ENCODE measurements at regions of chr11 and their contacts with region 1.

Region 1: GRCh38 chr11:86499721-86500141 is 125.0 kb downstream of the CCDC81 start:
- DNase-seq: peak; percentile 89 to 94
- H3K4me3 ChIP-seq: no peak overlapping the region
- H3K4me3 Mint-ChIP-seq: no peak overlapping the region
- H3K27ac Mint-ChIP-seq: no peak overlapping the region
- H3K4me1 ChIP-seq: peaks cover 59% of the 10 kb centered on the region
- H3K4me1 Mint-ChIP-seq: peaks cover 13% of the 10 kb centered on the region
- H3K27me3 ChIP-seq: no peaks in the 10 kb centered on the region
- H3K27me3 Mint-ChIP-seq: no peaks in the 10 kb centered on the region
- CTCF ChIP-seq: no peak

Region 2: GRCh38 chr11:86395061-86395551 is 104.6 kb before region 1 on chr11:
- CTCF ChIA-PET with region 1: no interaction called
- POLR2A ChIA-PET with region 1: no interaction called
- intact Hi-C with region 1: no loop called
- DNase-seq: no peak
- H3K4me3 ChIP-seq: no peak overlapping the region
- H3K4me3 Mint-ChIP-seq: no peak overlapping the region
- H3K27ac Mint-ChIP-seq: no peak overlapping the region
- H3K4me1 ChIP-seq: no peaks in the 10 kb centered on the region
- H3K4me1 Mint-ChIP-seq: no peaks in the 10 kb centered on the region
- H3K27me3 ChIP-seq: no peaks in the 10 kb centered on the region
- H3K27me3 Mint-ChIP-seq: no peaks in the 10 kb centered on the region
- CTCF ChIP-seq: no peak

Region 3: GRCh38 chr11:86469491-86470393 is 30.0 kb before region 1 on chr11:
- CTCF ChIA-PET with region 1: interaction called, 9 read pairs
- POLR2A ChIA-PET with region 1: no interaction called
- intact Hi-C with region 1: loop called (anchors 1 kb)
- DNase-seq: peak; percentile 89 to 91
- H3K4me3 ChIP-seq: no peak overlapping the region
- H3K4me3 Mint-ChIP-seq: peak overlapping the region; percentile 36
- H3K27ac Mint-ChIP-seq: peak overlapping the region; percentile 70
- H3K4me1 ChIP-seq: peaks cover 44% of the 10 kb centered on the region
- H3K4me1 Mint-ChIP-seq: peaks cover 58% of the 10 kb centered on the region
- H3K27me3 ChIP-seq: no peaks in the 10 kb centered on the region
- H3K27me3 Mint-ChIP-seq: no peaks in the 10 kb centered on the region
- CTCF ChIP-seq: no peak

Region 4: GRCh38 chr11:86511086-86511551 is 11.4 kb after region 1 on chr11:
- CTCF ChIA-PET with region 1: no interaction called
- POLR2A ChIA-PET with region 1: no interaction called
- intact Hi-C with region 1: loop called (anchors 1 kb)
- DNase-seq: no peak
- H3K4me3 ChIP-seq: no peak overlapping the region
- H3K4me3 Mint-ChIP-seq: no peak overlapping the region
- H3K27ac Mint-ChIP-seq: no peak overlapping the region
- H3K4me1 ChIP-seq: peaks cover 91% of the 10 kb centered on the region
- H3K4me1 Mint-ChIP-seq: peaks cover 3% of the 10 kb centered on the region
- H3K27me3 ChIP-seq: no peaks in the 10 kb centered on the region
- H3K27me3 Mint-ChIP-seq: no peaks in the 10 kb centered on the region
- CTCF ChIP-seq: no peak

Region 5: GRCh38 chr11:86523738-86524619 is 24.2 kb after region 1 on chr11:
- CTCF ChIA-PET with region 1: no interaction called
- POLR2A ChIA-PET with region 1: no interaction called
- intact Hi-C with region 1: loop called (anchors 1 kb)
- DNase-seq: peak; percentile 89 to 91
- H3K4me3 ChIP-seq: no peak overlapping the region
- H3K4me3 Mint-ChIP-seq: peak overlapping the region; percentile 38
- H3K27ac Mint-ChIP-seq: peak overlapping the region; percentile 88
- H3K4me1 ChIP-seq: peaks cover 57% of the 10 kb centered on the region
- H3K4me1 Mint-ChIP-seq: peaks cover 45% of the 10 kb centered on the region
- H3K27me3 ChIP-seq: no peaks in the 10 kb centered on the region
- H3K27me3 Mint-ChIP-seq: no peaks in the 10 kb centered on the region
- CTCF ChIP-seq: no peak

Region 6: DNA sequence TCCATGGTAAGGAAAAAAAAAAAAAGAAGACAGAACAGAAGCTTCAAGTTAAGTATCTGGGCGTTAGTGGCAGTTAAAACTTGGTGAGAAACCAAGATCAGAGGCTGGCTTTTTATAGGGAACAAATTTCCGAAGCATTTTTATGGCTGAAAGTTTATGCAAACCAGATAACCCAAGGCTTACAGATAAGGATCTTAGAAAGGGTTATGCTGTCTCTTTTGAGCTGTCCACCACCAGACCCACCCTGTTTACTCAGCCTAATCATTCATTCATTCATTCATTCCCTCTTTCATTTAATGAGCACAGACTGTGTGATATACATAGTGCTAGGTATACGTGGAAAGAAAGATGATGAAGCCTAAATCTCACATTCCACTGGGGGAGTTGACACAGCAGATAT is 83.2 kb after region 1 on chr11:
- CTCF ChIA-PET with region 1: no interaction called
- POLR2A ChIA-PET with region 1: no interaction called
- intact Hi-C with region 1: loop called (anchors 1 kb)
- DNase-seq: peak; percentile 46 to 53
- H3K4me3 ChIP-seq: no peak overlapping the region
- H3K4me3 Mint-ChIP-seq: peak overlapping the region; percentile 18
- H3K27ac Mint-ChIP-seq: peak overlapping the region; percentile 23
- H3K4me1 ChIP-seq: peaks cover 58% of the 10 kb centered on the region
- H3K4me1 Mint-ChIP-seq: peaks cover 21% of the 10 kb centered on the region
- H3K27me3 ChIP-seq: no peaks in the 10 kb centered on the region
- H3K27me3 Mint-ChIP-seq: no peaks in the 10 kb centered on the region
- CTCF ChIP-seq: no peak